Activated naive CD8-positive, alpha-beta T cell treated with anti-CD3 and anti-CD28 coated beads, Interleukin-2, amount 10 ng/mL, durations not matched to agents 7 days and 5 days (primary cell): ENCODE measurements at regions of chr18 and their contacts with region 1.

Region 1: DNA sequence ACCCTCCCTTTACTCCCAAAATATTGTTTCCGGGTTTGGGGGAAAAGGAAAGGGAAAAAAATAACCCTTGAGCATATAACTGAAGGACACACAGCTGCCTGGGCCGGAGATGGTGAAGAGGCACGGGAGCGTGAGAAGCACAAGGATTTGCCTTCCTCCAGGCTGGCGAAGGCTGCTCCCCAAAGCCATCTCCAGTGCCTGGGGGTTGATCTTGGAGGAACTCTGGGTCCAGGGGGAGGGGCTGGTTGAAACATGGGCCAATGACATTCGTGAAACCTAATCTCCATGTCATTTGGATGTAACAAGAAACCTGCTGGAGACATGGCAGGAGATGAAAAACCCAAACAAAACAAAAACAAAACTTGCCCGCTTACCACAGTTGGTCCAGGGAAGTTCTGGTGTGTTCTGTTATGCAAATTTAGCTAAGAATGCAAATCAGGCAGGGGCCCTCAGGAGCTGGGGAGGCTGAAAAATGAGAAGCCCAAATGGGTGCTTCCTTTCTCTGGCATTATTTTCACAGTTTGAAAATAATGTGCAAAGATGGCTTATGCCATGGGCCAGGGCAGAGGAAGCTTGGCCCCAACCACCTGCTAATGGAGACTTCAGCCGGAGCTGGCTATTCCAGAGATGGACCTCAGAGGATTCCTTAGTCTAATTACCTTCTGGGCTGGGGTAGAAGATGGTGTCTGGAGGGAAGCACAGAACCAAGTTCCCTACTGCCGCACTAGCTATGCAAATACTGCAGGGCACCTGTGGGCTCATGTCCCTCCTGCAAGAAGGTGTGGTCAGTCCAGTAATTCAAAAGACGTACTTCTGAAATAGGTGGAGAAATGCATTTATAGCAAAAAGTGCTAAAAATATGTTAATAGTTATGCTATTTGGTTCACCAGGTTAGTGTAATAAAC is 180.9 kb downstream of the BCL2 start:
- DNase-seq: no peak
- ATAC-seq: peak; percentile 25
- H3K4me3 Mint-ChIP-seq: peak overlapping the region; percentile 78
- H3K27ac Mint-ChIP-seq: peak overlapping the region; percentile 86
- H3K4me1 Mint-ChIP-seq: peaks cover 55% of the 10 kb centered on the region
- H3K27me3 Mint-ChIP-seq: no peaks in the 10 kb centered on the region

Region 2: GRCh38 chr18:63155169-63155852 is 16.6 kb after region 1 on chr18:
- POLR2A ChIA-PET with region 1: interaction called, 12 read pairs
- DNase-seq: peak; percentile 80
- ATAC-seq: peak; percentile 77
- H3K4me3 Mint-ChIP-seq: peak overlapping the region; percentile 81
- H3K27ac Mint-ChIP-seq: peak overlapping the region; percentile 90
- H3K4me1 Mint-ChIP-seq: peaks cover 92% of the 10 kb centered on the region
- H3K27me3 Mint-ChIP-seq: no peaks in the 10 kb centered on the region